ENCODE measurements at regions of chr6 and their contacts with region 1.

Region 1: GRCh38 chr6:24933868-24934401 is 1.8 kb downstream of the RIPOR2 start:
- DNase-seq: no peak
- ATAC-seq: peak; percentile 14; the same call in 1 of the 3 replicates
- H3K4me3 ChIP-seq: peak overlapping the region; percentile 74
- H3K27ac ChIP-seq: peak overlapping the region; percentile 75
- H3K4me1 ChIP-seq: peaks cover 55% of the 10 kb centered on the region
- H3K27me3 ChIP-seq: no peaks in the 10 kb centered on the region
- CTCF ChIP-seq: peak; percentile 78 to 95 (median 83)
- EP300 ChIP-seq: no peak
- POLR2A ChIP-seq: no peak
- RAD21 ChIP-seq: peak; percentile 57; the same call in 1 of the 2 replicates

Region 2: DNA sequence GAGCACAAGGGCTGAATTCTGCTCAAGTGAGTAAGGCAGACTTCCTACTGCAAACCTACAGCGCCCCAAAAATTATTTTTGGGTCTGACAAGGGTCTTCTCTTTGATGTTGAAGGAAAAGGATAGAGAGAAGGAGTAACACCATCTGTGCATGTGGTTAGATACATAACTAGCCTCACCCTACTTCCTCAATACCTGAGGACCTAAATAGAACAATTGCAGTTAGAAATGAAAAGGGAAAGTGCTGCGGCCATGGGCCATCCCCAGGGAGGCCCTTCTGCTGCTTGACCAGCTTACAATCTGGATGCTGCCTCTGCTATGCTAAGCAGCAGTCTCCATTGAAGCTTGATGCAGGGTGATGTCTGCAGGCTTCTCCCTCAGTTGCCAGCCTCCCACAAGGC is 72.0 kb before region 1 on chr6:
- CTCF ChIA-PET with region 1: interaction called, 84 read pairs
- POLR2A ChIA-PET with region 1: no interaction called
- RAD21 ChIA-PET with region 1: interaction called, 28 read pairs
- SMC1A ChIA-PET with region 1: interaction called, 54 read pairs
- in situ Hi-C with region 1: no loop called
- intact Hi-C with region 1: loop called (anchors 2 kb)
- DNase-seq: peak; percentile 65
- ATAC-seq: peak; percentile 93
- H3K4me3 ChIP-seq: peak overlapping the region; percentile 24; the same call in 1 of the 2 replicates
- H3K27ac ChIP-seq: peak overlapping the region; percentile 2; the same call in 1 of the 2 replicates
- H3K4me1 ChIP-seq: peaks cover 32% of the 10 kb centered on the region
- H3K27me3 ChIP-seq: no peaks in the 10 kb centered on the region
- CTCF ChIP-seq: no peak
- EP300 ChIP-seq: peak; percentile 20 to 46; a peak in 1 of 4 replicates
- POLR2A ChIP-seq: no peak
- RAD21 ChIP-seq: no peak

Region 3: DNA sequence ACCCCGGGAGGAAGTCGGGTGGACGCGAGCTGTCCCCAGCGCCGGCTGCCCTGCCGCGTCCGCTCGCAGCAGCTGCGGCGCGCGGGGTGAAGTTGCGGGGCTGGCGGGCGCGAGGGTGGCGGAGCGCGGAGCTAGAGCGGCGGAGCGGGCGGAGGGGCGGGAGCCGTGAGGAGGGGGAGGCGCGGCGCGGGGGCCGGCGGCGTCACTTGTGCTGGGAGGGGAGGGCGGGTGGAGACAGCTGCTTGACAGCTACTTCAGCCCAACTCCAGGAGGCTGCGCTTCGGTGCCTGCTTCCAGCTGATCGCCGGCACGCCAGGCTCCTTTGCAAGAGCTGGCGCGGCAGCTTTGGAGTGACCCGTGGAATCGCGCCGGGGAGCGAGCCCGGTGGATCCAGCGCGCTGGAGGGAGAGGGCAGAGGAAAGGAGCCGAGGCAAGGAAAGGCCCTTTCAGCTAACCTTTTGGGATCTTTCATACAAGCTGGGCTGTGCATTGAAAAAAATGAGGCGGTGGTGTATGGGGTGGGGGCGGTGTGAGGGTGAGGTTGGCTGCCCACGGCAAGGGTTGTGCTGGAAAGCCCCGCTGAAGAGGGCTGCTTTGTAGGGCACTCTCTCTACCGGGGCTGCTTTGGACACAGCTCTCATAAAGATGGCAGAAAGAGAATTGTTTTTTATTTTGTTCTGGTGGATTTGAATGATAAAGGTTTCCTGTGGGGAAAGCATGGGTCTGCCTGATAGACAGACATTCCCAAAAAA is 22.8 kb before region 1 on chr6:
- CTCF ChIA-PET with region 1: interaction called, 139 read pairs
- POLR2A ChIA-PET with region 1: interaction called, 23 read pairs
- RAD21 ChIA-PET with region 1: interaction called, 111 read pairs
- SMC1A ChIA-PET with region 1: interaction called, 201 read pairs
- in situ Hi-C with region 1: no loop called
- intact Hi-C with region 1: loop called (anchors 2 kb)
- DNase-seq: no peak
- ATAC-seq: peak; percentile 47
- H3K4me3 ChIP-seq: peak overlapping the region; percentile 86
- H3K27ac ChIP-seq: peak overlapping the region; percentile 60
- H3K4me1 ChIP-seq: peaks cover 26% of the 10 kb centered on the region
- H3K27me3 ChIP-seq: no peaks in the 10 kb centered on the region
- CTCF ChIP-seq: no peak
- EP300 ChIP-seq: no peak
- POLR2A ChIP-seq: no peak; the same call in 1 of the 2 replicates
- RAD21 ChIP-seq: no peak

Region 4: GRCh38 chr6:24968786-24969185 is 34.9 kb after region 1 on chr6:
- CTCF ChIA-PET with region 1: interaction called, 25 read pairs
- POLR2A ChIA-PET with region 1: interaction called, 3 read pairs
- RAD21 ChIA-PET with region 1: no interaction called
- SMC1A ChIA-PET with region 1: interaction called, 8 read pairs
- in situ Hi-C with region 1: no loop called
- intact Hi-C with region 1: no loop called
- DNase-seq: no peak
- ATAC-seq: no peak
- H3K4me3 ChIP-seq: no peak overlapping the region
- H3K27ac ChIP-seq: no peak overlapping the region
- H3K4me1 ChIP-seq: peaks cover under 1% of the 10 kb centered on the region; the same call in 1 of the 2 replicates
- H3K27me3 ChIP-seq: no peaks in the 10 kb centered on the region
- CTCF ChIP-seq: no peak
- EP300 ChIP-seq: no peak
- POLR2A ChIP-seq: no peak
- RAD21 ChIP-seq: no peak

Region 5: GRCh38 chr6:25017932-25018567 is 84.1 kb after region 1 on chr6:
- CTCF ChIA-PET with region 1: interaction called, 74 read pairs
- POLR2A ChIA-PET with region 1: interaction called, 3 read pairs
- RAD21 ChIA-PET with region 1: interaction called, 97 read pairs
- SMC1A ChIA-PET with region 1: interaction called, 37 read pairs
- in situ Hi-C with region 1: no loop called
- intact Hi-C with region 1: loop called (anchors 1 kb)
- DNase-seq: no peak
- ATAC-seq: peak; percentile 89
- H3K4me3 ChIP-seq: no peak overlapping the region
- H3K27ac ChIP-seq: no peak overlapping the region
- H3K4me1 ChIP-seq: peaks cover 5% of the 10 kb centered on the region
- H3K27me3 ChIP-seq: no peaks in the 10 kb centered on the region
- CTCF ChIP-seq: peak; percentile 76 to 90 (median 82)
- EP300 ChIP-seq: no peak
- POLR2A ChIP-seq: no peak
- RAD21 ChIP-seq: peak; percentile 99

Region 6: GRCh38 chr6:25053875-25054371 is 120.0 kb after region 1 on chr6:
- CTCF ChIA-PET with region 1: interaction called, 19 read pairs
- POLR2A ChIA-PET with region 1: interaction called, 7 read pairs
- RAD21 ChIA-PET with region 1: interaction called, 9 read pairs
- SMC1A ChIA-PET with region 1: interaction called, 18 read pairs
- in situ Hi-C with region 1: no loop called
- intact Hi-C with region 1: no loop called
- DNase-seq: no peak
- ATAC-seq: peak; percentile 93
- H3K4me3 ChIP-seq: no peak overlapping the region
- H3K27ac ChIP-seq: peak overlapping the region; percentile 41
- H3K4me1 ChIP-seq: peaks cover 26% of the 10 kb centered on the region
- H3K27me3 ChIP-seq: no peaks in the 10 kb centered on the region
- CTCF ChIP-seq: peak in 2 of 3 experiments; percentile 16 to 20; a peak in 2 of 6 replicates
- EP300 ChIP-seq: peak in 1 of 2 experiments; percentile 29; a peak in 1 of 4 replicates
- POLR2A ChIP-seq: no peak
- RAD21 ChIP-seq: peak; percentile 21; the same call in 1 of the 2 replicates

Region 7: DNA sequence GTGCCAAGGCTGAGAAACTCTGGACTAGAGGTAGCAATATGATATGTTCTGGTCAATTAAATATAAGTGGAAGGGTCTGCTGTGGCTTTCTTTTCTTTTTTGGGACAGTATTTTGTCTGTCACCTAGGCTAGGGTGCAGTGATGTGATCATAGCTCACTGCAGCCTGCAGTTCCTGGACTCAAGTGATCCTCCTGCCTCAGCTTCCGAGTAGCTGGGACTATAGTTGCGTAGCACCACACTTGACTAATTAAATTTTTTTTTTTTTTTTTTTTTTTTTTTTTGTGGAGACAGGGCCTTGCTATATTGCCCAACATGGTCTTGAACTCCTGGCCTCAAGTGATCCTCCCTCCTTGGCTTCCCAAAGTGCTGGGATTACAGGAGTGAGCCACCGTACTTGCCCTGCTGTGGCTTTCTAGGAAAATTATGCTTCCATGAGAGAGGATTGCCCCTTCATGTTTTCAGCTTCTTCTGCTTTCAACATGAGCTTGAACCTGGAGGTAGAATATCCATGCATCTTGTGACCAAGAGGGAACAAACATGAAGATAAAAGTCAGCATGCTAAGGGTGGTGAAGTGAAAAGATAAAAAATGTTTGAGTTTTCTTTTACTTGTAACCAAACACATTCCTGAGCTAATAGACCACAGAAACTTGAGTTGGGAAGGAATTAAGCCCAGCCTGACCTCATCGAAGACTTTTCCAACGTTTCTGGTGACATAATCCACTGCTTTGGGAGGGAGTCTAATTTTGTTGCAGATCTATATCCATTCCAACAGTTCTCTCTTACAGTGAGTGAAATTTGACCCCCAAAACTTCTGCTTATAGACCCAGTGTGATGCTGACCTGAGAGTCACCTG is 420.4 kb after region 1 on chr6:
- CTCF ChIA-PET with region 1: no interaction called
- POLR2A ChIA-PET with region 1: no interaction called
- RAD21 ChIA-PET with region 1: no interaction called
- SMC1A ChIA-PET with region 1: no interaction called
- in situ Hi-C with region 1: no loop called
- intact Hi-C with region 1: no loop called
- DNase-seq: no peak
- ATAC-seq: no peak
- H3K4me3 ChIP-seq: no peak overlapping the region
- H3K27ac ChIP-seq: no peak overlapping the region
- H3K4me1 ChIP-seq: no peaks in the 10 kb centered on the region
- H3K27me3 ChIP-seq: no peaks in the 10 kb centered on the region
- CTCF ChIP-seq: no peak
- EP300 ChIP-seq: no peak
- POLR2A ChIP-seq: no peak
- RAD21 ChIP-seq: no peak

Measured in GM12878 (cell line).